ENCODE measurements at regions of chrX and their contacts with region 1.

Region 1: DNA sequence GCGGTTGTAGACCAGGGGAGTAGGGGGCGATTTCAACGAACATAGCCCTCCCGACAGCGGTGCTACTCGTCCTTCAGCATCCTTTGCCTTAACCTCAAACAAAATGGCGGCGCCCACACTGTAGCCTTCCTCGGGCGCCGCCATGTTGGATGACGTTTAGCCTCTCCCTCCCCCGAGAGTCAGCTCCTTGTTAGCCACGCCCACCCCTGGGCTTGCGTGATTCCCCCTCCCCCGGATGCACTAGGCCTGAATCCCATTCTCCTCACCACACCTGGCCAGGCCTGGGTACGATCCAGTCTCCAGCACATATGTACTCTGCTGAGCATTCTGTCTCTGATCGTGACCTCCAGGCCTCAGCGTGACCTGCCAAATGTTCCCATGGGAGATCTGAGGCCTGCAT is 49.0 kb upstream of the ZNF157 start:
- DNase-seq: peak; percentile 78 to 84
- H3K4me3 ChIP-seq: peak overlapping the region in 3 of 4 experiments; percentile 15 to 45 (median 15); a peak in 4 of 8 replicates
- H3K27ac ChIP-seq: peak overlapping the region; percentile 87
- H3K4me1 ChIP-seq: peaks cover 0 to 12% (median 6%) of the 10 kb centered on the region in 4 experiments; a peak in 6 of 7 replicates
- H3K27me3 ChIP-seq: no peaks in the 10 kb centered on the region
- CTCF ChIP-seq: no peak
- EP300 ChIP-seq: no peak
- POLR2A ChIP-seq: peak; percentile 76 to 85
- RAD21 ChIP-seq: no peak

Region 2: GRCh38 chrX:47233337-47234113 is 87.9 kb before region 1 on chrX:
- CTCF ChIA-PET with region 1: no interaction called
- POLR2A ChIA-PET with region 1: interaction called, 14 read pairs
- DNase-seq: peak; percentile 79 to 82
- H3K4me3 ChIP-seq: peak overlapping the region; percentile 63 to 88 (median 72)
- H3K27ac ChIP-seq: peak overlapping the region; percentile 95
- H3K4me1 ChIP-seq: peaks cover 0 to 9% (median 5%) of the 10 kb centered on the region in 4 experiments; a peak in 4 of 7 replicates
- H3K27me3 ChIP-seq: no peaks in the 10 kb centered on the region
- CTCF ChIP-seq: no peak
- EP300 ChIP-seq: peak in 1 of 2 experiments; percentile 83; a peak in 1 of 3 replicates
- POLR2A ChIP-seq: peak; percentile 31 to 85
- RAD21 ChIP-seq: no peak

Region 3: GRCh38 chrX:47361538-47362511 is 40.4 kb after region 1 on chrX:
- CTCF ChIA-PET with region 1: interaction called, 3 read pairs
- POLR2A ChIA-PET with region 1: interaction called, 16 read pairs
- DNase-seq: peak; percentile 62 to 81
- H3K4me3 ChIP-seq: peak overlapping the region; percentile 52 to 61 (median 54); a peak in 7 of 8 replicates
- H3K27ac ChIP-seq: peak overlapping the region; percentile 95
- H3K4me1 ChIP-seq: no peaks in the 10 kb centered on the region
- H3K27me3 ChIP-seq: no peaks in the 10 kb centered on the region
- CTCF ChIP-seq: peak in 1 of 3 experiments; percentile 26; a peak in 1 of 4 replicates
- EP300 ChIP-seq: no peak
- POLR2A ChIP-seq: peak in 1 of 2 experiments; percentile 48; a peak in 1 of 3 replicates
- RAD21 ChIP-seq: peak; percentile 39 to 41; a peak in 3 of 4 replicates

Region 4: GRCh38 chrX:47384502-47384901 is 63.1 kb after region 1 on chrX:
- CTCF ChIA-PET with region 1: interaction called, 4 read pairs
- POLR2A ChIA-PET with region 1: interaction called, 15 read pairs
- DNase-seq: peak in 1 of 2 experiments; percentile 58
- H3K4me3 ChIP-seq: no peak overlapping the region
- H3K27ac ChIP-seq: no peak overlapping the region
- H3K4me1 ChIP-seq: peaks cover 0 to 11% (median 3%) of the 10 kb centered on the region in 4 experiments; a peak in 3 of 7 replicates
- H3K27me3 ChIP-seq: no peaks in the 10 kb centered on the region
- CTCF ChIP-seq: peak; percentile 22 to 67 (median 58)
- EP300 ChIP-seq: no peak
- POLR2A ChIP-seq: no peak
- RAD21 ChIP-seq: peak; percentile 76 to 86

Measured in H1 (cell line).